PC-9 (cell line): ENCODE measurements at regions of chr16 and their contacts with region 1.

Region 1: GRCh38 chr16:66275775-66276428 is 90.6 kb upstream of the CDH5 start:
- DNase-seq: peak; percentile 25 to 63
- H3K4me3 ChIP-seq: no peak overlapping the region
- H3K27ac ChIP-seq: no peak overlapping the region
- H3K4me1 ChIP-seq: peaks cover 64% of the 10 kb centered on the region
- H3K27me3 ChIP-seq: no peaks in the 10 kb centered on the region
- CTCF ChIP-seq: peak; percentile 70

Region 2: DNA sequence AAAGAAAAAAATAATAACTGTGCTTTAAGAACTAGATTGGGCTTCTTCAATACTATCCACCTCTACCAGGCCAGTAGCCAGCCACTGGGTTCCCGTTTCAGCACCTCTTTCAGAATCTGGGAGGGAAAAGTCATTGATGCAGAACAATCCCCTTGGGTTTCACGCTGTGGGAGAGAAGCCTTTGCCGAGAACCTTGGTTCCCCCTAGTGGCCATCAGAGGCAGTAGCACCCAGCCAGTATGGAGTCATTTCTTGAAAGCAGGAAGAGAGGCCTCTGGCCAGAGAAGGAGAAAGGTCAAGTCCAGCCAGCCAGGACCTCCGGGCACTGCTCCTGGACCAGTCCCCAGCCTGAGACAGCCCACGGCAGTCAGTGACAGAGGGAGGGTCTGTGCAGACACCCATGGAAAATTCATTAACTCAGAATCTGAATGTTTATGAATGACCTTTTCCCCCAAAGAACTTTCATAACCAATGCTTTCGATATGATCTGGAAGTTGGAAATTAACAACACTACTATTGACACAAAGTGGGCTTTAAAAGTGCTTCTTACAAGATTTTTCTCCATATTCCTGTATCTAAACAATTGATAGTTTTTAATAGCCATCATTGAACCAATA is 39.4 kb after region 1 on chr16:
- CTCF ChIA-PET with region 1: no interaction called
- POLR2A ChIA-PET with region 1: no interaction called
- intact Hi-C with region 1: loop called (anchors 1 kb)
- DNase-seq: peak; percentile 57 to 61
- H3K4me3 ChIP-seq: no peak overlapping the region
- H3K27ac ChIP-seq: no peak overlapping the region
- H3K4me1 ChIP-seq: peaks cover 6% of the 10 kb centered on the region; the same call in 1 of the 2 replicates
- H3K27me3 ChIP-seq: 0 out of 2 replicates have a peak, but pooled peaks cover 5% of the 10 kb centered on the region
- CTCF ChIP-seq: peak; percentile 97

Region 3: GRCh38 chr16:66344533-66345145 is 68.7 kb after region 1 on chr16:
- CTCF ChIA-PET with region 1: interaction called, 3 read pairs
- POLR2A ChIA-PET with region 1: no interaction called
- intact Hi-C with region 1: loop called (anchors 2 kb)
- DNase-seq: peak in 1 of 2 experiments; percentile 37
- H3K4me3 ChIP-seq: no peak overlapping the region
- H3K27ac ChIP-seq: no peak overlapping the region
- H3K4me1 ChIP-seq: no peaks in the 10 kb centered on the region
- H3K27me3 ChIP-seq: no peaks in the 10 kb centered on the region
- CTCF ChIP-seq: peak; percentile 90